CD8-positive, alpha-beta T cell (primary cell): ENCODE measurements at regions of chr7 and their contacts with region 1.

Region 1: DNA sequence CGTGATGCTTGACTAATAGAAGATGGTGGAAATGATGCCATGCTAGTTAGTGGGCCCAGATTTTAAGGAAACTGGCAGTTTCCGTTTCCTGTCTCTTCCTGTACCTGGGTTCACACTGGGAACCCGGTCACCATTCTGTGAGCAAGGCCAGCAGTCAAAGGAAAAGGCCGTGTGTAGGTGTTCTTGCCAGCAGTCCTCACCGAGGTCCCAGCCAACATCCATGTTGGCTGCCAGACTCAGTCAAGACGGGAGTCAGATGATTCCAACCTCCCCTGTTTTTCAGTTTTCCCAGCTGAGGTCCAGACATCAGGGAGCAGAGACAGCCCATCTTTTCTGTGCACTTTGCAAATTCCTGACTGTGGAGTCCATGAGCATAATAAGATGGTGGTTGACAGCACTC is 15.2 kb upstream of the PILRB start:
- DNase-seq: no peak
- ATAC-seq: no peak
- H3K4me3 ChIP-seq: no peak overlapping the region
- H3K4me3 Mint-ChIP-seq: no peak overlapping the region
- H3K27ac ChIP-seq: peak overlapping the region in 1 of 2 experiments; percentile 28
- H3K27ac Mint-ChIP-seq: peak overlapping the region; percentile 77
- H3K4me1 ChIP-seq: peaks cover 9% of the 10 kb centered on the region
- H3K4me1 Mint-ChIP-seq: peaks cover 23% of the 10 kb centered on the region
- H3K27me3 ChIP-seq: no peaks in the 10 kb centered on the region
- H3K27me3 Mint-ChIP-seq: no peaks in the 10 kb centered on the region
- CTCF ChIP-seq: no peak

Region 2: DNA sequence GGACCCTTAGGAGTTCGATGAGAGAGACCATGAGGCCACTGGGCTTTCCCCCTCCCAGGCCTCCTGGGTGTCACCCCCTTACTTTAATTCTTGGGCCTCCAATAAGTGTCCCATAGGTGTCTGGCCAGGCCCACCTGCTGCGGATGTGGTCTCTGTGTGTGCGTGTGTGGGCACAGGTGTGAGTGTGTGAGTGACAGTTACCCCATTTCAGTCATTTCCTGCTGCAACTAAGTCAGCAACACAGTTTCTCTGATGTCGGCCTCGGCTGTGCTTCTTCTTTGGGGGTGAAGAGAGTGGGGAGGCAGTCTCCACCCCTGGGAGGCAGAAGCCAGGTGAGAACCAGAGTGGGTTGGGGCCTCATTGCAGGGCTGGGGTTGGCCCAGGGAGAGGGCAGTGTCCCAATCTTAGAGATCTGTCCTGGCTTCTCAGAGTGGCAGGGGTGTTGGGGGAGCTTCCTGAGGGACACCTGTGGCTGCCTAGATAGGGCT is 121.5 kb before region 1 on chr7:
- CTCF ChIA-PET with region 1: interaction called, 4 read pairs
- POLR2A ChIA-PET with region 1: no interaction called
- intact Hi-C with region 1: loop called (anchors 2 to 10 kb)
- DNase-seq: peak; percentile 75 to 95 (median 86)
- ATAC-seq: peak; percentile 67
- H3K4me3 ChIP-seq: peak overlapping the region; percentile 84 to 88
- H3K4me3 Mint-ChIP-seq: peak overlapping the region; percentile 94
- H3K27ac ChIP-seq: peak overlapping the region; percentile 93 to 98
- H3K27ac Mint-ChIP-seq: peak overlapping the region; percentile 99
- H3K4me1 ChIP-seq: peaks cover 52% of the 10 kb centered on the region
- H3K4me1 Mint-ChIP-seq: peaks cover 62% of the 10 kb centered on the region
- H3K27me3 ChIP-seq: no peaks in the 10 kb centered on the region
- H3K27me3 Mint-ChIP-seq: no peaks in the 10 kb centered on the region
- CTCF ChIP-seq: no peak

Region 3: DNA sequence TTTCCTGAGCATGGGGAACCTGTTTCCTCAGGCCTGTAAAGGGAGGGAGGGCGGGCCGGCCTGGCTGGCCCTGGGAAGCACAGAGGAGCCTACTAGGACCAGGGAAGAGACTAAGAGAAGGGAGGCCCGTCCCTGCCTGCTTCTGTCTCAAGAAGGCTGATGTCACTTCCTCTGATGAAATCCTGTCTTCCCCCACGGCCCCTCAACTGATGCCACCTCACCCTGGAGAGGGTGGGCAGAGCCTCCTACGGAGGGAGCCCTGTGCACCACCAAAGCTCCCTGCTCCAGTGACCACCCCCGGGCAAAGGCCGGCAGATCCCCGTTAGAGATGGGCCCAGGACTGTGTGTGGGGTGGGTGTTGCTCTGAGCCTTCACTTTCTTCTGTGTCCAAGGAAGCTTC is 29.5 kb after region 1 on chr7:
- CTCF ChIA-PET with region 1: no interaction called
- POLR2A ChIA-PET with region 1: no interaction called
- intact Hi-C with region 1: no loop called
- DNase-seq: peak in 2 of 9 experiments; percentile 37 to 58
- ATAC-seq: peak; percentile 50
- H3K4me3 ChIP-seq: no peak overlapping the region
- H3K4me3 Mint-ChIP-seq: no peak overlapping the region
- H3K27ac ChIP-seq: peak overlapping the region; percentile 17 to 53
- H3K27ac Mint-ChIP-seq: peak overlapping the region; percentile 86
- H3K4me1 ChIP-seq: peaks cover 22% of the 10 kb centered on the region
- H3K4me1 Mint-ChIP-seq: peaks cover 34% of the 10 kb centered on the region
- H3K27me3 ChIP-seq: no peaks in the 10 kb centered on the region
- H3K27me3 Mint-ChIP-seq: no peaks in the 10 kb centered on the region
- CTCF ChIP-seq: no peak